ENCODE measurements at regions of chr11 and their contacts with region 1.

Region 1: GRCh38 chr11:2898366-2899079 is 12.9 kb upstream of the CDKN1C start:
- DNase-seq: peak in 2 of 4 experiments; percentile 44 to 73
- ATAC-seq: no peak
- H3K4me3 ChIP-seq: no peak overlapping the region
- H3K27ac ChIP-seq: no peak overlapping the region; the same call in 2 of the 3 replicates
- H3K4me1 ChIP-seq: peaks cover 32 to 65% of the 10 kb centered on the region in 2 experiments
- H3K27me3 ChIP-seq: no peaks in the 10 kb centered on the region
- CTCF ChIP-seq: no peak
- EP300 ChIP-seq: peak; percentile 32; the same call in 1 of the 2 replicates
- POLR2A ChIP-seq: no peak
- RAD21 ChIP-seq: no peak

Region 2: DNA sequence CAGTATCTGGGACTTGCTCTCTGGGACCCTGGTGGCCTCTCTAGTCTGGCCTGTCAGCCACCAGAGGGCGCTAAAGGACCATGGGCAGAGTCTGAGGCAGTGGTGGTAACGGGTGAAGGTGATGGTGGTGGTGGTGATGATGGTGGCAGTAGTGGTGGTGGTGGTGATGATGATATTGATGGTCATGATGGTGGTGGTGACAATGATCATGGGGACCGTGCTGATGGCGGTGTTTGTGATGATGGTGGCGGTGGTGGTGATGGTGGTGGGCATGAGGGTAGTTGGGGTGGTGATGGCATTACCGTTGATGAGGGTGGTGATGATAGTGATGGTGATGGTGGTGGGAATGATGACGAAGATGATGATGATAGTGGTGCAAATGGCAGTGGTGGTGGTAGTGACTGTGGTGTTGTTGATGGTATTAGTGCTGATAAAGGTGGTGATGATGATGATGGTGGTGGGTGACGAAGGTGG is 470.2 kb before region 1 on chr11:
- CTCF ChIA-PET with region 1: no interaction called
- POLR2A ChIA-PET with region 1: no interaction called
- in situ Hi-C with region 1: loop called (anchors 5 kb)
- intact Hi-C with region 1: no loop called
- DNase-seq: peak; percentile 67 to 76 (median 74)
- ATAC-seq: peak; percentile 96
- H3K4me3 ChIP-seq: no peak overlapping the region
- H3K27ac ChIP-seq: no peak overlapping the region
- H3K4me1 ChIP-seq: peaks cover 0 to 14% of the 10 kb centered on the region in 2 experiments; a peak in 2 of 5 replicates
- H3K27me3 ChIP-seq: peaks cover 0 to 43% of the 10 kb centered on the region in 2 experiments; a peak in 4 of 5 replicates
- CTCF ChIP-seq: peak; percentile 90 to 94 (median 91)
- EP300 ChIP-seq: no peak
- POLR2A ChIP-seq: no peak
- RAD21 ChIP-seq: peak; percentile 98 to 99

Region 3: DNA sequence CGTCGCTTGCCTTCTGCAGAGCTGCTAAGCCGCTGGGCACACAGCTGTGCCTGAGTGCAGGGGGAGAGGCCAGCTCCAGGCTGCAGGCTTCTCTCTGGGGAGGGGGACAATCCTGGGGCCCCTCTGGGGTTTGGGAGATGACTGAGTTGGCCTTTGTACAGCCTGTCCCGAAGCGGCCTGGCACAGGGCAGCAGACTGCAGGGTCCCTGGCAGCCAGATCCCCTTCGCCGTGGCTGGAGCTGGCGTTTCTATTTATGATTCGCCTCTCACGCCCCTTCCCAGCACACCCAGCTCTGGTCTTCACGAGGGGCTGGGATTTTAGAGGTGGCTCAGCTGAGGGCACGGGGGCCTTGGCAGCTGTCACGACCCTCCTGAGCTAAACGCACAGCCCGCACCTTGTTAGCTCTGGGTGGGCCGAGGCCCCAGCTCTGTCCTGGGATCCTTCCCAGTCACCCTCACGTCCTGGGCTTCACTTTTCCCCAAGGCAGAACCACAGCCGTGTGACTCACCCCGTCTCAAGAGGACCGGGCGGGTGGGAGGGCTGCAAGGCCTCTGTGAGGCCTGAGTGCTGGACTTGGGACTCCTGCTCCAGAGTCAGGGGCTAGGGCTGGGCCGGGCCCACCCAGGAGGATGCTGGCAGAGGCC is 248.2 kb after region 1 on chr11:
- CTCF ChIA-PET with region 1: no interaction called
- POLR2A ChIA-PET with region 1: no interaction called
- in situ Hi-C with region 1: no loop called
- intact Hi-C with region 1: no loop called
- DNase-seq: no peak
- ATAC-seq: no peak
- H3K4me3 ChIP-seq: no peak overlapping the region
- H3K27ac ChIP-seq: no peak overlapping the region
- H3K4me1 ChIP-seq: peaks cover 7 to 75% of the 10 kb centered on the region in 2 experiments; a peak in 3 of 5 replicates
- H3K27me3 ChIP-seq: no peaks in the 10 kb centered on the region
- CTCF ChIP-seq: no peak
- EP300 ChIP-seq: no peak
- POLR2A ChIP-seq: no peak
- RAD21 ChIP-seq: no peak

Measured in K562 (cell line).